ENCODE measurements at regions of chr22 and their contacts with region 1.

Region 1: DNA sequence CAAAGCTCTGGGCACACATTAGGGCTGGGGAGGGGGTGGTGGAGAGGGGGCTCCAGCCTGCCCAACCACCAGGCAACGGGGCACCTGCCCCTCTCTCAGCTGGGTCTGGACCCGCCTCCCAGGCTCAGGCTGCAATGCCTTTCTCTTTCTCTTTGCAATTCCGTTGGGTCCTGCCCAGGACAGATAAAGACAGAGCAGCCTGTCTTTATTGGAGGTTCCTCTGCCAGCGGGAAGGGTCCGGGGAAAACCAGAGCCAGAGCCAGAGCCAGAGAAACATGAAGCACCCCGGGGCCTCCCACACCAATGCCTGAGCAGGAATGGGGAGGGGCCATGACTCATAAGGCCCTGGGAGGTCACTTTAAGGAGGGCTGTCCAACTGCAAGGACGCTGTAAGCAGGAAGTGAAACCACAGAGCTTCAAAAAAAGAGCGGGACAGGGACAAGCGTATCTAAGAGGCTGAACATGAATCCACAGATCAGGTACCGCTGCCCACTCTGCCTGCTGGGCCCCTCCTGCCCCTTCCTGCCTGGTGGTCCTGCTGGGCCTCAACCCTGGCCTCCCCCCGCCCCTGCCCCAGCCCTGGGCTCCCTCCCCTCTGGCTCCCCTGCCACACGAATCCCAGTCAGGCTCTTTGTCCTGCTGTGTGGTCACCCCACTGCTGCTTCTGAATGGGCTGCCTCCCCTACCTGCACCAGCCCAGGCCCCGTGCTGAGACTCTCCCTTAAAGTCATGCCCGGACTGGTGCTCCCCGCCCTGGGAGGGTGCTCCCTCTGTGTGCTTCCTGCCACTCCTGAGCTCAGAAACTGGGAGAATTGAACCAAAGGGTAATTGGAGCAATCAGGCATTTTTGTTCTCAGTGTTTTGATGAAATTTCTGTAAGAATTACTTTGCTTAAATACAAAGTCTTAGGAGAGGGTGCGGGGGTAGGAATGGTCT is at the start of gene APOBEC3B:
- DNase-seq: peak; percentile 90
- H3K4me3 Mint-ChIP-seq: peak within 1 kb of the TSS; percentile 64
- H3K27ac Mint-ChIP-seq: peak within 1 kb of the TSS; percentile 83
- H3K4me1 Mint-ChIP-seq: peaks cover 55% of the 10 kb centered on the region
- H3K27me3 Mint-ChIP-seq: no peaks in the 10 kb centered on the region
- total RNA-seq, gene APOBEC3B: 43.9 to 44.3 TPM

Region 2: GRCh38 chr22:38941488-38941987 is 40.7 kb before region 1 on chr22:
- CTCF ChIA-PET with region 1: interaction called, 3 read pairs
- POLR2A ChIA-PET with region 1: interaction called, 13 read pairs
- intact Hi-C with region 1: loop called (anchors 1 kb)
- DNase-seq: peak; percentile 89
- H3K4me3 Mint-ChIP-seq: peak overlapping the region; percentile 45
- H3K27ac Mint-ChIP-seq: peak overlapping the region; percentile 80
- H3K4me1 Mint-ChIP-seq: peaks cover 35% of the 10 kb centered on the region
- H3K27me3 Mint-ChIP-seq: peaks cover 28% of the 10 kb centered on the region

Region 3: GRCh38 chr22:38953577-38954413 is 28.5 kb before region 1 on chr22:
- CTCF ChIA-PET with region 1: interaction called, 4 read pairs
- POLR2A ChIA-PET with region 1: interaction called, 6 read pairs
- intact Hi-C with region 1: loop called (anchors 1 kb)
- DNase-seq: peak; percentile 93
- H3K4me3 Mint-ChIP-seq: peak overlapping the region; percentile 50
- H3K27ac Mint-ChIP-seq: peak overlapping the region; percentile 87
- H3K4me1 Mint-ChIP-seq: peaks cover 31% of the 10 kb centered on the region
- H3K27me3 Mint-ChIP-seq: peaks cover 2% of the 10 kb centered on the region

Region 4: DNA sequence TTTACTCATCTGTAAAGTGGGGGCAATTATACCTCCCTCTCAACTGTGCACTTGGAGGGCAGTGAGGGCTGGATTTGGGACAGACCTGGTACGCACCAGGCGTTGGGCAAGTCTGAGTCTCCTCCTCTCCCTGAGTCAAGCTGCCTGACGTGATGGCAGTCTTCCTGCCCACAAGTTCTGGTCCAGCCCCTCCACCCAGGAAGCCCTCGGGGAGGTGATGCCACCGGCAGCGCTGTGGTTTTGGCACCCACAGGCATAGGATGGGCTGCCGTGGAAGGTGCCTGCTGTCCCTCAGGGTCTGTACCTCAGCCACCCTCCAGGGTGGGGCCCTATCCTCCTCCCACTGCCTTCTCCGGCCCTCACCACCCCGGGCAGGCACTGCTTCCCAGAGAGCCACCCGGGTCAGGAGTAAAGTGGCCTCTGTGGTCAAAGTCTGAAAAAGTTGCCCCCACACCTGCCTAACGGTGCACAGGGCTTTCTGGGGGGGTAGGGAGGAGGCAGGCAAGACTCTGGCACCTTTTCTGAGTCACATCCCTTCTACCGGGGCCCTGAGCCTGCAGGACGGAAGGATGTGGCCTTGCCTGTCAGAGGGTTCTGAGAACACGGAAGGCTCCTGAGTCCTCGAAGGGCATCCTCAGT is 108.3 kb after region 1 on chr22:
- CTCF ChIA-PET with region 1: no interaction called
- POLR2A ChIA-PET with region 1: no interaction called
- intact Hi-C with region 1: loop called (anchors 1 kb)
- DNase-seq: peak; percentile 95
- H3K4me3 Mint-ChIP-seq: peak overlapping the region; percentile 50
- H3K27ac Mint-ChIP-seq: peak overlapping the region; percentile 96
- H3K4me1 Mint-ChIP-seq: peaks cover 85% of the 10 kb centered on the region
- H3K27me3 Mint-ChIP-seq: no peaks in the 10 kb centered on the region